ENCODE measurements at regions of chr19 and their contacts with region 1.

Region 1: DNA sequence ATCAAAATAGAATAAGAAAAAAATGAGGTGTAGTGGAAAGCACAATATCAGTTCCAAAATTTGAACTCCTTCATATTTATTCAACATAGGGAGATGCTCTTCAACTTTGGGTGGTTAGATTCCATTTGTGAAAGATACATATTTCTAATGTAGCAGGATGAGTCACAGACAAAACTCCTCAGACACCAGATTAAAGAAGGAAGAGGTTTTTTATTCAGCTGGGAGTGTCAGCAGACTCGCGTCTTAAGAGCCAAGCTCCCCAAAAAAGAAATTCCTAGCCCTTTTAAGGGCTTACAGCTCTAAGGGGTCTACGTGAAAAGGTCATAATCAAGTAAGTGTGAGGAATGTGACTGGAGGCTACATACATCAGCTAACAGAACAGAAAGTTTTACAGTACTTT is 6.8 kb upstream of the ZNF765 start:
- DNase-seq: peak; percentile 40
- ATAC-seq: peak; percentile 43; the same call in 1 of the 2 replicates
- H3K4me3 ChIP-seq: no peak overlapping the region
- H3K27ac ChIP-seq: peak overlapping the region; percentile 52
- H3K4me1 ChIP-seq: peaks cover 19% of the 10 kb centered on the region
- H3K27me3 ChIP-seq: no peaks in the 10 kb centered on the region
- CTCF ChIP-seq: no peak

Region 2: DNA sequence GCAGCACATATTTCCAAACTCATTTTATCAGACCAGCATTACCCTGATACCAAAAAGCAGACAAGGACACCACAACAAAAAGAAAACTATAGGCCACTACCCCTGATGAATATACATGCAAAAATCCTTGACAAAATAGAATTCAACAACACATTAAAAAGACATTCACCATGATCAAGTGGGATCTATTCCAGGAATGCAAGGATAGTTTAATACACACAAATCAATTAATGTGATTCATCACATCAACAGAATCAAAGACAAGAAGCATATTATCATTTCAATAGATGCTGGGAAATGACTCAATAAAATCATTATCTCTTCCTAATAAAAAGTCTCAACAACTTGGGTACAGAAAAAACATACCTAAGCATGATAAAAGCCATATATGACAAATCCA is 240.5 kb before region 1 on chr19:
- CTCF ChIA-PET with region 1: no interaction called
- POLR2A ChIA-PET with region 1: no interaction called
- intact Hi-C with region 1: no loop called
- DNase-seq: no peak
- ATAC-seq: no peak
- H3K4me3 ChIP-seq: no peak overlapping the region
- H3K27ac ChIP-seq: no peak overlapping the region
- H3K4me1 ChIP-seq: no peaks in the 10 kb centered on the region
- H3K27me3 ChIP-seq: no peaks in the 10 kb centered on the region
- CTCF ChIP-seq: no peak

Region 3: GRCh38 chr19:53467485-53468262 is 79.5 kb after region 1 on chr19 and contains the start of gene ZNF813:
- CTCF ChIA-PET with region 1: no interaction called
- POLR2A ChIA-PET with region 1: no interaction called
- intact Hi-C with region 1: no loop called
- DNase-seq: peak; percentile 88
- ATAC-seq: peak; percentile 93
- H3K4me3 ChIP-seq: peak within 1 kb of the TSS; percentile 88
- H3K27ac ChIP-seq: peak within 1 kb of the TSS; percentile 28; the same call in 1 of the 2 replicates
- H3K4me1 ChIP-seq: no peaks in the 10 kb centered on the region
- H3K27me3 ChIP-seq: no peaks in the 10 kb centered on the region
- CTCF ChIP-seq: no peak
- total RNA-seq, gene ZNF813: 3.5 and 4.4 TPM in 2 replicates

Region 4: GRCh38 chr19:53520550-53521372 is 132.6 kb after region 1 on chr19:
- CTCF ChIA-PET with region 1: no interaction called
- POLR2A ChIA-PET with region 1: no interaction called
- intact Hi-C with region 1: loop called (anchors 1 kb)
- DNase-seq: peak; percentile 99
- ATAC-seq: peak; percentile 99
- H3K4me3 ChIP-seq: peak overlapping the region; percentile 91
- H3K27ac ChIP-seq: peak overlapping the region; percentile 34; the same call in 1 of the 2 replicates
- H3K4me1 ChIP-seq: peaks cover 5% of the 10 kb centered on the region; the same call in 1 of the 2 replicates
- H3K27me3 ChIP-seq: no peaks in the 10 kb centered on the region
- CTCF ChIP-seq: no peak

Region 5: GRCh38 chr19:53571390-53571789 is 183.2 kb after region 1 on chr19:
- CTCF ChIA-PET with region 1: no interaction called
- POLR2A ChIA-PET with region 1: no interaction called
- intact Hi-C with region 1: no loop called
- DNase-seq: no peak
- ATAC-seq: no peak
- H3K4me3 ChIP-seq: no peak overlapping the region
- H3K27ac ChIP-seq: no peak overlapping the region
- H3K4me1 ChIP-seq: no peaks in the 10 kb centered on the region
- H3K27me3 ChIP-seq: no peaks in the 10 kb centered on the region
- CTCF ChIP-seq: no peak

Measured in PC-3 (cell line).